ENCODE measurements at regions of chr12 and their contacts with region 1.

Region 1: DNA sequence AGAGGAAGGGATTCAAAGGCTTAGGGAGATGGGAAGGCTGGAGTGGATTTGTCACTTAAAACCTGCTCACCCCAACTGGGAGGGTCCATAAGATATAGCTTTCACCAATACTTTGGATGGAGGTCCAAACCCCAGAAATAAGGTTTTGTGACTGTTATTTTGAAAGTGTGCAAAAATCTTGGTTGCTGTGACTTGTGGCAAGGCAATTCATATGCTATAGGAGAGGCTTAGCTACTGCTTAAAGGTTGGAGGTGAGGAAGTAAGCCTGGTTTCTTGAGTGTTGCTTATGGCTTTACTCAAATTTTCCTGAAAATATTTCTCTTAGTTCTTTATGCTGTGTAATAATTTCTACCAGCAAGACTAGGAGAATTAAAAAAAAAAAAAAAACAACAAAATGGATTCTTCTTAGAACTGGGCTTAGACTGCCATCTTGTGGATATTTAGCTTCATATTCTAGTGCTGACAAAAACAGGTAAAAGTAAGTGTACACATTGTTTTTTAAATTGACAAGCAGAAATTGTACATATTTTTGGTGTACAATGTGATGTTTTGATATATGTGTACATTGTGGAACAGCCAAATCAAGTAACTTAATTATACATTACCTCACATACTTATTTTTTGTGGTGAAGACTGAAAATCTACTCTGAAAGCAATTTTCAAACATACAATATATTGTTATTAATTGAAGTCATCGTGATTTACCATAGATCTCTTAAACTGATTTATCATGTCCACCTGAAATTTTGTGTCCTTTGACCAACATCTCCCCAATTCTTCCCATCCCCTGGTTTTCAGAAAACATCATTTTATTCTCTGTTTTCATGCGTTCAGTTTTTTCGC is 23.0 kb downstream of the PDE6H start:
- DNase-seq: no peak
- H3K4me3 ChIP-seq: no peak overlapping the region
- H3K27ac ChIP-seq: no peak overlapping the region
- H3K4me1 ChIP-seq: no peaks in the 10 kb centered on the region
- H3K27me3 ChIP-seq: no peaks in the 10 kb centered on the region
- CTCF ChIP-seq: peak in 2 of 3 experiments; percentile 40 to 43; a peak in 2 of 4 replicates
- EP300 ChIP-seq: no peak
- POLR2A ChIP-seq: no peak
- RAD21 ChIP-seq: peak in 1 of 2 experiments; percentile 77

Region 2: GRCh38 chr12:14845350-14845750 is 150.5 kb before region 1 on chr12:
- CTCF ChIA-PET with region 1: interaction called, 116 read pairs
- POLR2A ChIA-PET with region 1: no interaction called
- DNase-seq: no peak
- H3K4me3 ChIP-seq: no peak overlapping the region
- H3K27ac ChIP-seq: no peak overlapping the region
- H3K4me1 ChIP-seq: no peaks in the 10 kb centered on the region
- H3K27me3 ChIP-seq: no peaks in the 10 kb centered on the region
- CTCF ChIP-seq: peak in 2 of 3 experiments; percentile 55 to 58; a peak in 2 of 4 replicates
- EP300 ChIP-seq: no peak
- POLR2A ChIP-seq: no peak
- RAD21 ChIP-seq: peak; percentile 90 to 93

Region 3: DNA sequence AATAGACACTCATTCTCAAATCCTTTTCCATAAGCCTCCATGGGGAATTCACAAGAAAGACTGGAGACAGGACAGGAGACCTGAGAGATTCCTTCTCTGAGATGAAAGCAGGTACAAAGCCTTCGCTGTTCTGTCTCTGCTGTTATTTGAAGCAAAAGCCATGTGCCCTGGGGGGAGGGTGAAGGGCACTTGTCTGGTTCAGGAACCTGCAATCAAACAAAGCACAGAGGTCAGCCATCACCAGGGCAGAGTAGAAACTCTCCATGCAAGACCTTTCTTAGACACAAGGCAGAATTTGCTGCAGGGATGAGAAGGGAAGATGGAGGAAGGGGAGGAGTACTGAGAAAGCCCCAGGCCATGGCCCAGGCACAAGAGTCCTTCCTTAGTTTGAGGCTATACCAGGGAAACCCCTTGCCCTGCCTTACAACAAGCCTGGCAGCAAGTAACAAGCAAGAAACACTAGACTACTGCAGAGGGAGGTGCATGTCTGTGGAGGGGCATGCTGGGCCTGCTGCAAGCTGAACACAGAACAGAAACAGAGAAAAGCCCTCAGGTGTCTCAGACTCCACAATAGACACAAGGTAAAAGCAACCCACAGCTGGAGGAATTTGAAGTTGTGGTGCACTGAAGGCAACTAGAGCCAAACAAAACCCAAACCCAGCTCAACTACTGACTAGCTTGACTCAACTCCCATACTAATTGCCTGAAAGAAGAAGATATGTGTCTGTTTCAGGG is 144.7 kb before region 1 on chr12:
- CTCF ChIA-PET with region 1: interaction called, 116 read pairs
- POLR2A ChIA-PET with region 1: no interaction called
- DNase-seq: no peak
- H3K4me3 ChIP-seq: no peak overlapping the region
- H3K27ac ChIP-seq: no peak overlapping the region
- H3K4me1 ChIP-seq: peaks cover 0 to 6% (median 0%) of the 10 kb centered on the region in 4 experiments; a peak in 2 of 7 replicates
- H3K27me3 ChIP-seq: no peaks in the 10 kb centered on the region
- CTCF ChIP-seq: no peak
- EP300 ChIP-seq: no peak
- POLR2A ChIP-seq: no peak
- RAD21 ChIP-seq: no peak